Ascending aorta (tissue), 2 donors: ENCODE measurements at regions of chr15 and their contacts with region 1.

Region 1: DNA sequence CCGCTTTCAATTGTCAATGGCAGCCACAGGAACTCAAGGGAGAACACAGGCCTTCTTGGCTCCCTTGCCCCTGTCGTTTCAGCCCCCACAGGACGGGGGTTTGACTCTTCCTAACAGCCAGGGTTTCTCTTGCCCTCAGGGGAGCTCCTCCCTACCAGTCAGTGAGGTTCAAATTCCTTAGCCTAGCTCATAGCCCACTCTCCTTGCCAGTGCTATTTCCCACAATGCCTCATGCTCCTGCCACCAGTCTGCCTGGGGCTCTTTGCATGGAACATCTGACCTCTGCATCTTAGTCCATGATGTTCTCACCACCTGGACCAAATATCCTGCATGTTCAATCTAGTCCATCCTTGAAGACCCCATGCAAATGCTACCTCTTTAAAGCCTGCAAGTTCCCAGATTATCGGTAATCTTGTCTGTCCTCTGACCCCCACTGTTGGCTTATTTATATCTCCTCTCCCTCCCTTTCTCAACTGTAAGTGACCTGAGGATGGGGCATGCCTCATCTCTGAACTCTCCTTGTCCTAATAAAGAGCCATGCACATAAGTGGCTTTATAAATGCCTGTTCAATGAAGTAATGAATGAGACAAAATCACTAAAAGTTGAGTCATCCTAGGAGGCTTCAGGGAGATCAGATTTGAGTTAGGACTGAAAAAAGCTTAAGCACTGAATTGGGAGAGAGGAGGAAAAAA is 78.0 kb downstream of the MYO1E start:
- DNase-seq: no peak
- H3K4me3 ChIP-seq: peak overlapping the region in 1 of 2 donors; percentile 18
- H3K27ac ChIP-seq: peak overlapping the region; percentile 88
- H3K4me1 ChIP-seq: peaks cover 24 to 40% of the 10 kb centered on the region in 2 donors
- H3K27me3 ChIP-seq: no peaks in the 10 kb centered on the region
- CTCF ChIP-seq: no peak

Region 2: DNA sequence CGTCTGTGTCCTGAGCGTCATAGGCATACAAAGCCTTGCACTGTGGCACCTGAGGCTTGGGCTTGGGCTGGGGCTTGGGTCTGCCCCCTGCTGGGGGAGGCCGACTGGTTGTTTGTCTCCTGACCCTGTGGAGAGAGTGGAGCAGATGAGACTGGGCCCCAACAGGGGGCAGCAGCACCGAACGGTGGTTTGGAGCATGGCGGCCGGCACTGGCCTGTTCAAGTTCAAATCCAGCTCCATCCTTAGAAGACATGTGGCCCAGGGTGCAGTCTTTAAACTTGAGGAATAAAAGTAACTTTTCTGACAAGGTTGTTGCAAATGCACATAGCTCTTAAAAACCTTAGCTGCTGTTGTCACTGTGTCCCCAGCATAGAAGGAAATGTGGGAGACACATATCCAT is 156.5 kb before region 1 on chr15:
- intact Hi-C with region 1: no loop called
- DNase-seq: no peak
- H3K4me3 ChIP-seq: no peak overlapping the region
- H3K27ac ChIP-seq: no peak overlapping the region
- H3K4me1 ChIP-seq: no peaks in the 10 kb centered on the region
- H3K27me3 ChIP-seq: no peaks in the 10 kb centered on the region
- CTCF ChIP-seq: peak; percentile 14 to 45 (median 34)

Region 3: GRCh38 chr15:59372352-59373211 is 77.9 kb after region 1 on chr15 and contains the start of gene MYO1E:
- intact Hi-C with region 1: loop called (anchors 1 kb)
- DNase-seq: peak; percentile 78 to 95
- H3K4me3 ChIP-seq: peak within 1 kb of the TSS; percentile 73 to 99
- H3K27ac ChIP-seq: peak within 1 kb of the TSS; percentile 91 to 99
- H3K4me1 ChIP-seq: no peaks in the 10 kb centered on the region
- H3K27me3 ChIP-seq: no peaks in the 10 kb centered on the region
- CTCF ChIP-seq: no peak
- total RNA-seq, gene MYO1E: 48.0 TPM

Region 4: DNA sequence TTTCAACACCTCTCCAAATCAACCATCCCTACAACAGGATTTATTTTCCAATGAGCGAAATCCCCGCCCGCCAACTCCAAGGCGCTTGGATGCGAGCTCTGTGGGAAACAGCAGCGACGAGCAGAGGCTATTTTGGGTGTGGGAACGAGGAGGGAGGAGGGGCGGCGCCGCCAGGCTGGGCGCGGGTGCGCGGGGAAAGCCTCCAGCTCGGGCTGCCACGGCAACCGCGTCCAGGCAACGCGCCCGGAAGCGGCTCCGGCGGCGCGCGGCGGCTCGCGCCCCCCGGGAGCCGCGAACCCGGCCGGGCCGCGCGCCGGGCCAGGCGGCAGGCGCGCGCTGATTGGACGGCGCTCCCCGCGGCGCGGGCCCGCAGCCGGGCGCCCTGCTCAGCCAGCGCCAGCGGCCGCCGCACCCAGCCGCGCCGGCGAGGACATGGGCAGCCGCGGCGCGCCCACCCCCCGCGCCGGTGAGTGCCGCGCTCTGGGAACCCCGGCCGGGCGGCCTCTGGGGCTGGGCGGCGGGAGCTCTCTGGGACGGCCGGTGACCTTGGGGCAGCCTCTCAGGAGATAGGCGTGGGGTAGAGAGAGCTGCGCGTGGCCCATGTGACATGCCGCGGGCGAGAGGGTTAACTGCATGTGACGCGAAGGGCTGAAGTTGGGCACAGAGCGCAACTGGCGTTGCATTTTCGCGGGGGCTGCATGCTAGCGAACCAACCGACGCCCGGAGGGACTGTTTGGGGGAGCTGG is 143.3 kb after region 1 on chr15 and contains the start of gene FAM81A:
- intact Hi-C with region 1: loop called (anchors 5 kb)
- DNase-seq: peak; percentile 11 to 92
- H3K4me3 ChIP-seq: peak within 1 kb of the TSS; percentile 59 to 83
- H3K27ac ChIP-seq: peak within 1 kb of the TSS in 1 of 2 donors; percentile 15
- H3K4me1 ChIP-seq: peaks cover 0 to 12% of the 10 kb centered on the region in 2 donors
- H3K27me3 ChIP-seq: no peaks in the 10 kb centered on the region
- CTCF ChIP-seq: no peak
- total RNA-seq, gene FAM81A: not detected